BJ (cell line): ENCODE measurements at regions of chr3 and their contacts with region 1.

Region 1: GRCh38 chr3:187738331-187739093 is 6.8 kb downstream of the BCL6 start:
- DNase-seq: no peak
- H3K4me3 ChIP-seq: peak overlapping the region; percentile 45
- H3K27me3 ChIP-seq: no peaks in the 10 kb centered on the region
- CTCF ChIP-seq: peak; percentile 77

Region 2: GRCh38 chr3:188154014-188154808 is 415.7 kb after region 1 on chr3 and contains the start of gene LPP:
- CTCF ChIA-PET with region 1: interaction called, 15 read pairs
- POLR2A ChIA-PET with region 1: interaction called, 7 read pairs
- DNase-seq: no peak
- H3K4me3 ChIP-seq: peak within 1 kb of the TSS; percentile 79
- H3K27me3 ChIP-seq: no peaks in the 10 kb centered on the region
- CTCF ChIP-seq: no peak
- polyA plus RNA-seq, gene LPP: 33.3 and 60.0 TPM in 2 replicates

Region 3: GRCh38 chr3:188270423-188270972 is 532.0 kb after region 1 on chr3:
- CTCF ChIA-PET with region 1: interaction called, 45 read pairs
- POLR2A ChIA-PET with region 1: interaction called, 5 read pairs
- DNase-seq: peak; percentile 77
- H3K4me3 ChIP-seq: no peak overlapping the region
- H3K27me3 ChIP-seq: no peaks in the 10 kb centered on the region
- CTCF ChIP-seq: no peak

Region 4: DNA sequence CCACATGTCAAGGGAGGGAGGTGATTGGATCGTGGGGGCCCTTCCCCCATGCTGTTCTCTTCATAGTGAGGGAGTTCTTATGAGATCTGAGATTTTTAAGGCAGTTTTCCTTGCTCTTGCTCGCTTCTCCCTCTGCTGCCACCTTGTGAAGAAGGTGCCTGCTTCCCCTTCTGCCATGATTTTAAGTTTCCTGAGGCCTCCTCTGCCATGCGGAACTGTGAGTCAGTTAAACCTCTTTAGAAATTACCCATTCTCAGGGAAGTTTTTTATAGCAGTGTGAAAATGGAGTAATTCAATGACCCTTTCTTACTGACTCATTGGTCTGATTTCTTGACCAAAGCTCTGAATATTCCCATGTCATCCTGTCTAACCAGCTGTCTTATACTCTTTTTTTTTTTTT is 948.9 kb after region 1 on chr3:
- CTCF ChIA-PET with region 1: interaction called, 18 read pairs
- POLR2A ChIA-PET with region 1: no interaction called
- DNase-seq: peak; percentile 34
- H3K4me3 ChIP-seq: no peak overlapping the region
- H3K27me3 ChIP-seq: no peaks in the 10 kb centered on the region
- CTCF ChIP-seq: peak; percentile 38

Region 5: DNA sequence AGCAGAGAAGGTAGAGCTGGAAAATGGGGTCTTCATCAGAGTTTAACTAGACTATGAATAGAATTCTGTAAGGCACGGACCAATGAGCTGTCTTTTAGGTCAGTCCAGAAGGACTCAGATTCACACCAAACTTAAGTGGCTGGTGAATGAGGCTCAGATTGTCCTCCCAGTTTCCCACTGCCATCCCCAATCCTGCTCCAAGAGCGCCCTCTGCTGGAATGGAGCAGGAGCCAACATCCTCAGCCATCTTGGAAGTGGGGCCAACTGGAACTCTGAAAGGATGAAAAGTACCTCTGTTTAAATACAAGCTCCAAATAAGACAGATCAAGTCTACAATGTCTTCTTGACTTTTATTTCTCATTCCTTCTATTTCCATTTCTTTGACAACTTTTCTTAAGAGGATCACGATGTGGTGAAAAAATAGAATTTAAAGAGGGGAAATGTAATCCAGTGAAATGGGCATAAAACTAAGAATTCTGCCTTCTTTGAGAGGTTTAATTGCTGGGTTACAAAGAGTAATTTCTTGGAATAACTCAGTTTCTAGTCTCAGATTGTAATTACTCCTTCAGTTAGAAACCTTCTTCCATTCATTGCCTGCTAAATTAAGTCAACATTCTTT is 1216.2 kb after region 1 on chr3:
- CTCF ChIA-PET with region 1: interaction called, 250 read pairs
- POLR2A ChIA-PET with region 1: no interaction called
- DNase-seq: no peak
- H3K4me3 ChIP-seq: no peak overlapping the region
- H3K27me3 ChIP-seq: no peaks in the 10 kb centered on the region
- CTCF ChIP-seq: peak; percentile 97